Activated B cell treated with CpG ODN at 0.5 μM for 24 hours (primary cell): ENCODE measurements at regions of chr7 and their contacts with region 1.

Region 1: DNA sequence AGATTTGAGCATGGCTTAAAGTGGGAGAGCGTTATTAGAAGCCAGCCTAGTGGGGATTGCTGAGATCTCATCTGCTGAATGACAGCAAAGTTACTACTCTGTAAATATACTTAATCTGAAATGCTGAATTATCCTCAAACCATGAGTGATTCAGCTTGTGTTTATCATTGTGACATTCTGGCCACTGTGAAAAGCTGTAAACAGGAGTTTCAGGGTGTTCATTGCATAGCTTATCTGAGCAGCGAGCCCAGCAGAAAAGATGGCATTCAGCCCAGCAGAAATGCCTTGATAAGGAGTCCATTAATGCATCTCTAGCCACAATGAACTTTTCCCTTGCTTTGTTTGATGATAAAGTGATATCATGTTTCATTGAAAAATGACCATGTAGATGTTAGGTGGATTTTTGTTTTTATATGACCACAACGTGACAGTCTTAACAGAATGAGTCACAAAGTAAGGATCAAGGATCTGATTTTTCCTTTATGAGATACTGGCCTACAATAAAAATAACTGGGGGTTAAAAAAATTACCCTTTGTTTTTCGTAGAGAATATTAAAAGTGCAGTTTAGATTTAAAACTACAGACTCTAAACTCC is 7.8 kb downstream of the TES start:
- DNase-seq: no peak
- ATAC-seq: no peak
- H3K4me3 Mint-ChIP-seq: peak overlapping the region; percentile 28
- H3K27ac Mint-ChIP-seq: no peak overlapping the region
- H3K4me1 Mint-ChIP-seq: peaks cover 83% of the 10 kb centered on the region
- H3K27me3 Mint-ChIP-seq: no peaks in the 10 kb centered on the region
- CTCF ChIP-seq: no peak

Region 2: DNA sequence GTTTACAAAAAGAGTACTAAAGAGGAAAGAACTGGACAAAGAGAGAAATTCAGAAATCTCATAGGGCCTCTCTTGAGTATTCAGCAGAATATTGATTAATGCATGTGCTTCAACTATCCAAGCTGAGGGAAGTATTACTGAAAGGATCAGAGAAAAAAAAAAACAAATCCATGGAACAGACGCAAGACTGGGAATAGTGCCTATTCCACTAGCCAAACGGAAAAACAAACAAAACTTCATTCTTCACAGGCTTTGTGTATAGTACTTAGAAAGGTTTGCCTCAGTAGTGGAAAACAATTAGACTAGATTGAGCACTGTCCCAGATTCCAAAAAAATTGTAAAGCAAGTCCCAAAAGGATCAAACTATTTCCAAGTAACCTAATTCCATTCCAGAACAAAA is 293.7 kb before region 1 on chr7:
- CTCF ChIA-PET with region 1: no interaction called
- POLR2A ChIA-PET with region 1: no interaction called
- intact Hi-C with region 1: no loop called
- DNase-seq: no peak
- ATAC-seq: no peak
- H3K4me3 Mint-ChIP-seq: no peak overlapping the region
- H3K27ac Mint-ChIP-seq: no peak overlapping the region
- H3K4me1 Mint-ChIP-seq: no peaks in the 10 kb centered on the region
- H3K27me3 Mint-ChIP-seq: no peaks in the 10 kb centered on the region
- CTCF ChIP-seq: no peak

Region 3: GRCh38 chr7:116200963-116201362 is 17.2 kb before region 1 on chr7:
- CTCF ChIA-PET with region 1: no interaction called
- POLR2A ChIA-PET with region 1: no interaction called
- intact Hi-C with region 1: loop called (anchors 2 kb)
- DNase-seq: no peak
- ATAC-seq: no peak
- H3K4me3 Mint-ChIP-seq: no peak overlapping the region
- H3K27ac Mint-ChIP-seq: no peak overlapping the region
- H3K4me1 Mint-ChIP-seq: no peaks in the 10 kb centered on the region
- H3K27me3 Mint-ChIP-seq: no peaks in the 10 kb centered on the region
- CTCF ChIP-seq: no peak

Region 4: DNA sequence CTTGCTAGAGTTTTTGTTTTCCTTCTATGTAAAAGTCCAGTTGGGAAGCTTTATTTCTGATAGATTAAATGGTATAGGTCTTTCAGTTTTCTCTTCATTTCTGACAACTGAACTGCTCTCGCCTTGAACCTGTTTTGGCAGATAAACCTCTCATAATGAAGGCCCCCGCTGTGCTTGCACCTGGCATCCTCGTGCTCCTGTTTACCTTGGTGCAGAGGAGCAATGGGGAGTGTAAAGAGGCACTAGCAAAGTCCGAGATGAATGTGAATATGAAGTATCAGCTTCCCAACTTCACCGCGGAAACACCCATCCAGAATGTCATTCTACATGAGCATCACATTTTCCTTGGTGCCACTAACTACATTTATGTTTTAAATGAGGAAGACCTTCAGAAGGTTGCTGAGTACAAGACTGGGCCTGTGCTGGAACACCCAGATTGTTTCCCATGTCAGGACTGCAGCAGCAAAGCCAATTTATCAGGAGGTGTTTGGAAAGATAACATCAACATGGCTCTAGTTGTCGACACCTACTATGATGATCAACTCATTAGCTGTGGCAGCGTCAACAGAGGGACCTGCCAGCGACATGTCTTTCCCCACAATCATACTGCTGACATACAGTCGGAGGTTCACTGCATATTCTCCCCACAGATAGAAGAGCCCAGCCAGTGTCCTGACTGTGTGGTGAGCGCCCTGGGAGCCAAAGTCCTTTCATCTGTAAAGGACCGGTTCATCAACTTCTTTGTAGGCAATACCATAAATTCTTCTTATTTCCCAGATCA is 481.0 kb after region 1 on chr7:
- CTCF ChIA-PET with region 1: no interaction called
- POLR2A ChIA-PET with region 1: no interaction called
- intact Hi-C with region 1: no loop called
- DNase-seq: no peak
- ATAC-seq: no peak
- H3K4me3 Mint-ChIP-seq: no peak overlapping the region
- H3K27ac Mint-ChIP-seq: no peak overlapping the region
- H3K4me1 Mint-ChIP-seq: no peaks in the 10 kb centered on the region
- H3K27me3 Mint-ChIP-seq: peaks cover 51% of the 10 kb centered on the region
- CTCF ChIP-seq: no peak